ENCODE measurements at regions of chr5 and their contacts with region 1.

Region 1: DNA sequence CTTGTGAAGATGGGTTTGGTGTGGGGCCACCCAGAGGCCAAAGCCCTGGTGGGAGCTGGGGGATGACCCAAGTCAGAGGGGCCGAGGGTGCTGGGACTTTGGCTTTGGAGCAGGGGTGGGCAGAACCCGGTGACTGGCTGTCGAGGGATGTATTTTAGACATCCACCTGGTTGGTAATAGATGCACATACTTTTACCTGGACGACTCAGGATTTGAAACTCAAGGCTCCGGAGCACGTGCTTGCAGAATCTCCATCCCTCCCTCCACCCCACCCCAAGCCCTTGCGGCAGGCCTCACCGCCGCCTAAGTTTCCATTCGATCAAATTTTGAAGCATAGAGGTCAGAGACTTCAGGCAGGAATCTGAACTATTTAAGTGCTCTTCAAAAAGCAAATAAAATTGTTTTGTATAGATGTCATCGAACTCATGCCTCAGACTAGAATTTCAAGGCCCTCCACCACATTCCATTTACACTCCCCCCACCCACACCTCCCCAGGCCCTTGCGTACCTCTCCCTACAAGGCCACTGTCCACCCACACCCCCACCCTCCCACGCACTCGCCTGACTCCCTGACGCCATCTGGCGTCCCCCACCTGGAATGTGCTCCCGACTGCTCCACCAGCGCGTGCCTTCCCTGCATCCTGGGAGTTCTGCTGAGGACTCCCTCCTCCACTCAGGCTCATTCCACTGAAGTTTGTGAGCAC is 56.6 kb upstream of the RPL26L1 start:
- DNase-seq: peak; percentile 81 to 87 (median 85)
- ATAC-seq: peak; percentile 48 to 72 (median 59)
- H3K4me3 ChIP-seq: no peak overlapping the region
- H3K27ac ChIP-seq: peak overlapping the region; percentile 28 to 96 (median 90)
- H3K4me1 ChIP-seq: peaks cover 2 to 82% (median 64%) of the 10 kb centered on the region in 12 donors
- H3K27me3 ChIP-seq: no peaks in the 10 kb centered on the region
- CTCF ChIP-seq: peak; percentile 18 to 71 (median 58)
- POLR2A ChIP-seq: no peak

Region 2: DNA sequence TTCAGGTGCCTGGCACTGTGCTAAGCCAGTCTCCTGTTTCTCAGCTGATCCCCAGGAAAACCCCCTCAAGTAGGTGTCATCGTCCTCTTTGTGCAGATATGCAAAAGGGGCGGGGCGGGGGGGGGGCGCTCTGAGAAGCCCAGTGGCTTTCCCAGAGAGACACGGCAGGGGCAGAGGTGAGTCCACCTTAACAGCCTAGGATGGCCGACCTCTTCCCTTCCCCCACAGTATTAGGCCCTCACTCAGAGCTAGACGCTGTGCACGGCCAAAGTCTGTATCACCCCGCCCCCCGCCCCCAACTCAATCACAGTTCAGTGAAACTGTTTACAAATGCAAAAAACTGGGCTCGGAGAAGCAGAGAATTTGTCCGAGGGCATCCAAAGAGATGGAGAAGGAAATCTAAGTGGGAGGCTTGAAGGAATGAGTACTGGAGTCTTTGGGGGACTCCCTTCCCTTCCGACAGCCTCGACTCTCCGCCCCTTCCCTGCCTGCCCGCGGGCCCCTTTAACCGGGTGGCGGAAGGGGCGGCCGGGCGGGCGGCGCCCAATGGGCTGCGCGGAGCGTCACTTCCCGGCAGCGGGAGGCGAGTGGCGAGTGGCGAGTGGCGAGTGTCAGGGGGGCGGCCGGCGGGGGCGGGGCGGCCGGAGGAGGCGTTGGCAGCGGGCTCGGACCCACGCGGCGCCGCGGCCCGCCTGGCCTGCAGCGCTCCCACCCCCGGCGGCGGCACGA is 68.8 kb before region 1 on chr5 and contains the start of gene ERGIC1:
- intact Hi-C with region 1: loop called in 1 of 10 experiments (anchors 5 kb)
- DNase-seq: peak; percentile 88 to 95 (median 91)
- ATAC-seq: peak; percentile 80 to 94 (median 92)
- H3K4me3 ChIP-seq: peak within 1 kb of the TSS; percentile 74 to 97 (median 85)
- H3K27ac ChIP-seq: peak within 1 kb of the TSS; percentile 64 to 91 (median 84)
- H3K4me1 ChIP-seq: peaks cover 3 to 60% (median 22%) of the 10 kb centered on the region in 12 donors
- H3K27me3 ChIP-seq: no peaks in the 10 kb centered on the region
- CTCF ChIP-seq: peak in 1 of 12 donors; percentile 5
- POLR2A ChIP-seq: peak in 1 of 2 donors; percentile 73
- total RNA-seq, gene ERGIC1: 67.0 to 109 (median 84.9) TPM

Region 3: DNA sequence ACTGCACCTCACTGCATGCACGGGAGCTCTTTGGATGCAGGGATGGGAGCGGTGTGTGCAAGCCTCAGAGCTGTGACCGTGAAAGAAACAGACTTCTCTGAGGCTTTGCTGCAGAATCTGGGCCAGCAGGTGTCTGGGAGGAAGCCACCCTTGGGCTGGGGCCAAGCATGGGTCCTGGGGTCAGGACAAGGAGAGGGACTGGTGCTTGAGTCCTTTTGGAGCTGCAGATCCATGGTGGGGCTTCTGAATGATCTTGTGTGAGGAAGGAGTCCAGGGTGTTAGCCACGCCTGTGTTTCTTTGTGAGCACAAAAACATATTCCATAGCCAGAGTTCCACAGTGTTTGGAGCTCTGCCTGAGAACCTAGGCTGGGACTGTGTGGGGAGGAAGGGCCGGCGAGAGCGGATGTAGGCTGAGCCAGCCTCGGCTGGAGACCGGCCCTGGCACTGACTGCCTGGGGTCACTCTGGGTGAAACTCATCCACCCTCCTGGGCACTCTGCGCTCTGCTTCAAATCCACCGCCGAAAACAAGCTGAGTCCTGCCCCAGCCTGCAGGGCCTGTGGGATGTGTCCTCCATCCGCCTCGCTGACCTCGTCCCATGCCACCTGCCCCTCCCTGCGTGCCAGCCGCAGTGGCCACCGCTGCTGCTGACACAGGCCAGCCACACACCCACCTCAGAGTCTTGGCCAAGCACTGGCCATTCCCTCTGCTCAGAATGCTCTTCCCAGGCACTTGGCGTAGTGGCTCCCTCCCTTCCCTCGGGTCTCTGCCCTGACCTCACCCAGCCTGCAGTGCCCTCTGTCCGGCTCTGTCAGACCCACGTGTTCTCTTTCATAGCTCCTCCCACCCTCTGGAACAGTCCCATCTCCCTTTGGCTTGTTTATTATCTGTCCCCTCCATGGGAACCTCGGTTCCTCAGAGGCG is 41.9 kb before region 1 on chr5:
- intact Hi-C with region 1: loop called in 6 of 10 experiments (anchors 1 to 5 kb)
- DNase-seq: peak; percentile 88 to 95 (median 90)
- ATAC-seq: peak; percentile 87 to 93 (median 90)
- H3K4me3 ChIP-seq: peak overlapping the region in 9 of 12 donors; percentile 7 to 26 (median 21)
- H3K27ac ChIP-seq: peak overlapping the region; percentile 87 to 97 (median 94)
- H3K4me1 ChIP-seq: peaks cover 24 to 76% (median 59%) of the 10 kb centered on the region in 12 donors
- H3K27me3 ChIP-seq: no peaks in the 10 kb centered on the region
- CTCF ChIP-seq: no peak
- POLR2A ChIP-seq: peak in 1 of 2 donors; percentile 53